A549 (cell line): ENCODE measurements at regions of chr20 and their contacts with region 1.

Region 1: GRCh38 chr20:62010551-62011402 is 54.9 kb downstream of the TAF4 start:
- DNase-seq: peak; percentile 51 to 69
- ATAC-seq: peak; percentile 65 to 84; a peak in 3 of 6 replicates
- H3K4me3 ChIP-seq: no peak overlapping the region
- H3K27ac ChIP-seq: no peak overlapping the region
- H3K4me1 ChIP-seq: no peaks in the 10 kb centered on the region
- CTCF ChIP-seq: peak; percentile 80
- EP300 ChIP-seq: no peak
- POLR2A ChIP-seq: no peak
- RAD21 ChIP-seq: peak; percentile 89 to 92

Region 2: DNA sequence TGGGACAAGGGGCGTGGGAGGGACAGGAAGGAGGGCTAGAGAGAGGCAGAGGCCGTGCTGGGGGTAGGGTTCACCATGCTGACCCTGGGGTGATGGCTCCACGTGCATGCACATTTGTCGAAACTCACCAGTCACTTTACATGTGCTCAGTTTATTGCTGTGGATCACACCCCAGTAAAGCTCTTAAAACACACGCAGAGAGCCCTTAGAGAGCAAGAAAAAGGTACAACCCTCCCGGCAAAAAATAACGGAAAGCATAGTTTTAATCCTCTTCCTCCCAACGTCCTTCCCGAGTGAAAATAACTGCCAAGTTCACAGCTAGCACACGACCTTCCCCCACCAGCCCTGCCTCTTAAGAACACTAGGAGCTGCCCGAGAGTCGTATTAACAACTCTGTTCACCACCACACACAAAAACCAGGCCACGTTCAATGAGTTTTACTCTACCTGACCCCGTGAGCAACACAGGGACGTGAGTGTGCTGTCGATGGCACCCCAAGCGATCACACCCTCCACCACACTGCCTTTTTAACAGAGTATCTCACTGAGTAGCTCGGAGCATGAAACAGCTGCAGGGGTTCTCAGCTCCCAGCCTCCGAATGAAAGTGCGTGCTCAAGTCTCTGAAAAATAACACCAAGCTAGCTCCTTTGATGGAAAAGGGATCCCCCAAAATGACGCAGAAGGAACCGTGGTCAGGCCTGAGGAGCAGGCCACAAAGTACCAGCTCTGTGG is 15.2 kb after region 1 on chr20:
- CTCF ChIA-PET with region 1: interaction called, 31 read pairs
- POLR2A ChIA-PET with region 1: no interaction called
- DNase-seq: no peak
- ATAC-seq: no peak
- H3K4me3 ChIP-seq: no peak overlapping the region
- H3K27ac ChIP-seq: no peak overlapping the region
- H3K4me1 ChIP-seq: no peaks in the 10 kb centered on the region
- CTCF ChIP-seq: no peak
- EP300 ChIP-seq: no peak
- POLR2A ChIP-seq: no peak
- RAD21 ChIP-seq: no peak

Region 3: DNA sequence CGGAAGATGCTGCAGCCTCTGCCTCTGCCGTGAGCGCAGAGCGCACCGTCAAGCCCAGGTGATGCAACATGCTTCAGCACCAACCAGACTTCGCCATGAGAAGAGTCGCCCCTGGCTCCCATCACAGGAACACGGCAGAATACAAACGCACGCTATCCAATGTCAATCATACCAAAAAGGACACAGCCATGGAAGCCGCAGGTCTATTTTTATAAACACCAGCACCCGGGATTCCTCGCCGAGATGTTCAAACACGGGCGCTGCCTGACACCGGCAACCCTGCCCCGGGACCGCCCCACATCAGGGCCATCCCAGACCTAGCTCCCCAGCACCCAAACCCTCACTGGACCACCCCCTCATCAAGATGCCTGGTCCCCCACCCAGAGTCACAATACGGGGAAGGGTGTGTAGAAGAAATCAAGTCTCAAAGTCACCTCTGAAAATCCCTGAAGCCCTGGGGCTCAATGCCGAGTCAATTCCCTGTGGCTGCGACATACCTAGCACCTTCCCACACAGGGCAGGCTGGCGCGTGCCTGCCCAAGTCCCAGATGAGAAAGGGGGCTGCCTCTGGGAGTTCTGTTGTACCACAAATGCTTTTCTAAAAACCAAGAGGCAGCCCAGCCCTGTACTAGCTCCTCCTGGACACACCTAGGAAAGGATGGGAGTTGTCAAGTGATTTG is 37.0 kb after region 1 on chr20:
- CTCF ChIA-PET with region 1: interaction called, 10 read pairs
- POLR2A ChIA-PET with region 1: no interaction called
- DNase-seq: no peak
- ATAC-seq: no peak
- H3K4me3 ChIP-seq: no peak overlapping the region
- H3K27ac ChIP-seq: no peak overlapping the region
- H3K4me1 ChIP-seq: peaks cover 9% of the 10 kb centered on the region; the same call in 2 of the 3 replicates
- CTCF ChIP-seq: no peak
- EP300 ChIP-seq: no peak
- POLR2A ChIP-seq: no peak
- RAD21 ChIP-seq: no peak

Region 4: GRCh38 chr20:62136283-62137091 is 125.7 kb after region 1 on chr20:
- CTCF ChIA-PET with region 1: interaction called, 75 read pairs
- POLR2A ChIA-PET with region 1: interaction called, 8 read pairs
- DNase-seq: peak; percentile 73 to 78
- ATAC-seq: peak; percentile 65 to 78; a peak in 5 of 6 replicates
- H3K4me3 ChIP-seq: no peak overlapping the region
- H3K27ac ChIP-seq: no peak overlapping the region
- H3K4me1 ChIP-seq: peaks cover 7% of the 10 kb centered on the region
- CTCF ChIP-seq: peak; percentile 81
- EP300 ChIP-seq: no peak
- POLR2A ChIP-seq: no peak
- RAD21 ChIP-seq: peak; percentile 65 to 72